ENCODE measurements at regions of chr12 and their contacts with region 1.

Region 1: DNA sequence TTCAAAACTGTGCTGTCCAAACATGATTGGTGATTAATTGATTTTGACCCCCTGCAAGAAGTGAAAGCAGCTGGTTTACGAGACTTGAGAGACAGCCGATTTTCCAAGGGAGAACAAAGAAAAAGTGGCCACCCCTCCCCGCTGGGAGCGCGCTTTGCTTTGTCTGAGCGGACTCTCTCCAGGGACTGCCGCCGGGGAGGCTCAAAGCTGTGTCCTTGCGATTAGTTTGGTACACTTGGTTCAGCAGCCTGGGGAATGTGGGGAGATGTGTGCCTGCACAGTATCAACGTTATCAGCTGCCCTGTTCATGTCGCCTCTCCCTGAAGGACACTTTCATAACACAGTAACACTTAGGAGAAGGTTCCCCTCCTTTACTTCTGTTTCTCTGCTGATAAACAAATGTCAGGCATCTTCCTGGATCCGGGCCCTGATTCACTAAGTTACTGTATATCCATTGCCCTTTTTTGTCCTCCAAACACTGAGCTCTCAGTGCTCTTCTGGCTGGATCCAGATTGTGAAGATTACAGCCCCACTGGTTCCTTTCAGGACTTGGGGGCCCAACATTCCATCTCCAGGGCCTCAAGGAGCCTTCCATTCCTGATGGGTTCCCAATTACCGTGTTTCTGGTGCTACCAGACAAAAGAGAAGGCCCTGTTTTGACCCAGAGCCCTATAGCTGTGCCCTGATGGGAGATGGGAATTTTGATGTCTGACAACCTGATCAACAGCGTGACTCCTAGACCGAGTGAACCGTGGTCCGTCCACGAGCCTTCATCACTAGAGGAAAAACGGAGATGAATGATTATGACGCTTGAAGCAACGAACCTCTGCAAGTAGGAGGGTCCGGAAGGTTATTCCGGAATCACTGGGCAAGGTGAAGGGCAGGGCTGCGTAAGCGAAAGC is 31.7 kb upstream of the TUBA1C start:
- DNase-seq: peak; percentile 85 to 98 (median 89)
- ATAC-seq: peak; percentile 90
- H3K4me3 ChIP-seq: peak overlapping the region; percentile 34
- H3K27ac ChIP-seq: peak overlapping the region; percentile 87
- H3K4me1 ChIP-seq: peaks cover 27 to 40% of the 10 kb centered on the region in 2 experiments
- H3K27me3 ChIP-seq: no peaks in the 10 kb centered on the region
- CTCF ChIP-seq: peak; percentile 45 to 62 (median 57)
- EP300 ChIP-seq: peak; percentile 88
- POLR2A ChIP-seq: no peak
- RAD21 ChIP-seq: peak; percentile 16 to 29; a peak in 2 of 4 replicates

Region 2: DNA sequence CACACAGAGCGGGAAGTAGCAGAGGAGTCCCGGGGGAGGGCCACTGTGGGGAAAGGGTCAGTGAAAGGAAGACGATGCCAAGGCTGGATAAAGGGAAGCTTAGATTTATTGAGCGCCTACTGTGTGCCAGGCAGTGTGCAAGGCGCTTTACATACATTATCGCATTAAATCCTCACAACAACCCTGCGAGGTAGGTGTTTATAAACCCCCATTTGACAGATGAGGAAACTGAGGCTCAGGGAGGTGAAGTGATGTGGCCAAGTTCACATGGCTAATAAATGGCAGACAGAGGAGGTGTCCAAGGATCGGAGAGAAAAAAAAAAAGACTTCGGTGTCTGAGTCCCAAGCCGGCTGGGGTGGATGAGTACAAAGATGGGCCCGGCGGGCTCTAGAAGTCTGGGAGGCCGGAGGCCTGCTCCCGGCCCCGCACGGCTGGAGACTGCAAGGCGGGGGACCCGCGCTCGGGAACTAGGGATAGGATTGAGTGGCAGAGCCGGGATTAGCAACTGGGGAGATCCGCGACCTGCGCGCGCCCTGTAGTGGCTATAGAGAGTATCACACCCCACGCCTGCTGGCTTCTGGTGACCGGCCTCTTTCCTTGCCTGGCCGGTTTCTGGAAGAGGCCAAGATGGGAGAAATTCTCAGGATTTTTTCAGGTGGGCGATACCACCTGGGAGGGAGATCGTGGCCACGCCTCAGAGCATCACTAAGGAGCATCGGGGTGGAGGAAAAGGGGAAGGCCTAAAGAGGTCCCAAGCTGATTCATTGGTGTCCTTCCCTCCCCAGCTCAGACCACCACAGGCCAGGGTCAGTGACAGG is 237.9 kb before region 1 on chr12:
- CTCF ChIA-PET with region 1: interaction called, 4 read pairs
- POLR2A ChIA-PET with region 1: no interaction called
- in situ Hi-C with region 1: no loop called
- intact Hi-C with region 1: loop called (anchors 10 kb)
- DNase-seq: peak; percentile 84 to 90 (median 88)
- ATAC-seq: peak; percentile 80
- H3K4me3 ChIP-seq: no peak overlapping the region
- H3K27ac ChIP-seq: no peak overlapping the region
- H3K4me1 ChIP-seq: peaks cover 12 to 49% of the 10 kb centered on the region in 2 experiments
- H3K27me3 ChIP-seq: 0 out of 5 replicates have a peak, but pooled peaks cover 0 to 5% of the 10 kb centered on the region in 2 experiments
- CTCF ChIP-seq: peak; percentile 85 to 88 (median 87)
- EP300 ChIP-seq: no peak
- POLR2A ChIP-seq: no peak
- RAD21 ChIP-seq: peak; percentile 60 to 78

Region 3: GRCh38 chr12:49060237-49061156 is 172.7 kb before region 1 on chr12 and contains the start of gene KMT2D:
- CTCF ChIA-PET with region 1: interaction called, 12 read pairs
- POLR2A ChIA-PET with region 1: interaction called, 3 read pairs
- in situ Hi-C with region 1: loop called (anchors 5 kb)
- intact Hi-C with region 1: loop called (anchors 1 kb)
- DNase-seq: peak; percentile 89 to 96 (median 91)
- ATAC-seq: peak; percentile 72
- H3K4me3 ChIP-seq: peak within 1 kb of the TSS; percentile 94
- H3K27ac ChIP-seq: peak within 1 kb of the TSS; percentile 98
- H3K4me1 ChIP-seq: peaks cover 15 to 20% of the 10 kb centered on the region in 2 experiments; a peak in 4 of 5 replicates
- H3K27me3 ChIP-seq: no peaks in the 10 kb centered on the region
- CTCF ChIP-seq: 0 out of 6 replicates have a peak, but pooled peaks of 2 of the 3 experiments have one; percentile 6 to 13
- EP300 ChIP-seq: peak; percentile 53; the same call in 1 of the 2 replicates
- POLR2A ChIP-seq: peak; percentile 88
- RAD21 ChIP-seq: no peak
- polyA plus RNA-seq, gene KMT2D: 0.22 to 1.4 TPM

Region 4: DNA sequence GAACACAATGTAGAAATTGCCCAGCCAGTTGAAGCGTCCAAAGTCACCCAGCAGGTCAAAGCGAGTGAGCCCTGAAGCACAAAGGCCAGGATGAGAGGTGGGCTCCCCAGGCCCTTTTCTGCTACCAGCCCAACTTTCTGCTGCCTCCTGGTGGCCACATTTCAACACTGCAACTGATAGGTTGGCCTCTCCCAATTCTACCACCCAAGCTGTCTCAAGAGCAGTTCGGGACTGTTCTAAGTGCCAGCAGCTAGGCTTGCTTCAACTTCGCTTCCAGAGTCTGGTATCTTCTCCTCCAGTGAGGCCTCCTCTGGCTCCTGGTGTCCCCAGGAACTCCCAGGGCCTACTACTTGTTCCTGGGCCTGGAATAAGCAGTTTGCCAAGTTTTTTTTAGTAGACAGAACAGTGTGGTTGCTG is 135.1 kb before region 1 on chr12:
- CTCF ChIA-PET with region 1: interaction called, 4 read pairs
- POLR2A ChIA-PET with region 1: interaction called, 4 read pairs
- in situ Hi-C with region 1: no loop called
- intact Hi-C with region 1: loop called (anchors 1 kb)
- DNase-seq: peak; percentile 68 to 78 (median 74)
- ATAC-seq: peak; percentile 76
- H3K4me3 ChIP-seq: no peak overlapping the region
- H3K27ac ChIP-seq: no peak overlapping the region; the same call in 2 of the 3 replicates
- H3K4me1 ChIP-seq: peaks cover 27 to 28% of the 10 kb centered on the region in 2 experiments
- H3K27me3 ChIP-seq: no peaks in the 10 kb centered on the region
- CTCF ChIP-seq: peak; percentile 86 to 94 (median 89)
- EP300 ChIP-seq: no peak
- POLR2A ChIP-seq: no peak
- RAD21 ChIP-seq: peak; percentile 64 to 85

Region 5: DNA sequence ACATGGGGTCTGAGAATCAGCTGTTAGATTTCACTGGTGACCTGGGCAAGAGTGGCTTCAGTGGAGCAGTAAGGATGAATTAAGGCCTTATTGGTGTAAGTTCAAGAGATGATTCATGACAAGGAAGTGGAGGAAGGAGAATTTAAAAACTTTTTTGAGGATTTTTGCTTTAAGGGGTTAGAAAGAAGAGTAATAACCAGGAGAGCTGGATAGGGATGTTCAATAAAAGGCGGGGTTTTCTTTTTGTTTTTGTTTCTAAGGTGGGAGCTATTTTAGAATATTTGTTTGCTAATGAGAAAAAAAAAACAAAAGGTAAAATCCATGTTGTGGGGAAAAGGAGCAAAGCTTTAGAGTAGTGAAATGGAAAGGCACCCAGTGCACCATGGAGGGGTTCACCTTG is 86.8 kb before region 1 on chr12:
- CTCF ChIA-PET with region 1: no interaction called
- POLR2A ChIA-PET with region 1: no interaction called
- in situ Hi-C with region 1: loop called (anchors 5 kb)
- intact Hi-C with region 1: no loop called
- DNase-seq: no peak
- ATAC-seq: no peak
- H3K4me3 ChIP-seq: no peak overlapping the region
- H3K27ac ChIP-seq: no peak overlapping the region
- H3K4me1 ChIP-seq: peaks cover 0 to 4% of the 10 kb centered on the region in 2 experiments; a peak in 2 of 5 replicates
- H3K27me3 ChIP-seq: no peaks in the 10 kb centered on the region
- CTCF ChIP-seq: no peak
- EP300 ChIP-seq: no peak
- POLR2A ChIP-seq: no peak
- RAD21 ChIP-seq: no peak

Region 6: DNA sequence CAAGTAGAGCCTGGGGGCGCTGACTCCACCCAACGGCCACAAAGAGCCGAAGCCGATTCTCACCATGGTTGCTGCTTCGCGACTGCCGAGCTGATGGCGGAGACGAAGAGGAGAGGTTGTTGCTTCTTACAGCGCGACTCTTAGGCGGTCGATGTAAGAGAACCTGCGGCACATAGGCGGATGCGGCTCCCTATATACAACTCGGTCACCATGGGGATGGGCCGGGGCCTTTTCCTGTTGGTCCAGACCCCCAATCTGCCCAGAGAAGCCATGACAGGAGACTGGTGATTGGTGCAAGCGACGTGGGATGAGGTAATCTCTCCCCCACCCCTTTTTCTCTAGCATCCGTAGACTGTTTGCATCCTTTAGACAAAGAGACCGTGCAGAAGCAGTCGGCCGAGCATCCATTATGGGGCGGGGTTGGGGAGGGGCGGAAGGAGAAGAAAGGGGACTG is 44.2 kb before region 1 on chr12 and contains the start of gene TUBA1A:
- CTCF ChIA-PET with region 1: no interaction called
- POLR2A ChIA-PET with region 1: interaction called, 4 read pairs
- in situ Hi-C with region 1: no loop called
- intact Hi-C with region 1: loop called (anchors 2 kb)
- DNase-seq: peak; percentile 53 to 73 (median 65)
- ATAC-seq: peak; percentile 82
- H3K4me3 ChIP-seq: peak within 1 kb of the TSS; percentile 86
- H3K27ac ChIP-seq: peak within 1 kb of the TSS; percentile 37; the same call in 2 of the 3 replicates
- H3K4me1 ChIP-seq: peaks cover 3 to 16% of the 10 kb centered on the region in 2 experiments
- H3K27me3 ChIP-seq: no peaks in the 10 kb centered on the region
- CTCF ChIP-seq: peak in 1 of 3 experiments; percentile 20; a peak in 1 of 6 replicates
- EP300 ChIP-seq: no peak
- POLR2A ChIP-seq: no peak
- RAD21 ChIP-seq: no peak
- polyA plus RNA-seq, gene TUBA1A: 23.7 to 24.2 TPM

Measured in K562 (cell line).